Head of caudate nucleus (tissue), 42 donors: ENCODE measurements at regions of chr11 and their contacts with region 1.

Region 1: DNA sequence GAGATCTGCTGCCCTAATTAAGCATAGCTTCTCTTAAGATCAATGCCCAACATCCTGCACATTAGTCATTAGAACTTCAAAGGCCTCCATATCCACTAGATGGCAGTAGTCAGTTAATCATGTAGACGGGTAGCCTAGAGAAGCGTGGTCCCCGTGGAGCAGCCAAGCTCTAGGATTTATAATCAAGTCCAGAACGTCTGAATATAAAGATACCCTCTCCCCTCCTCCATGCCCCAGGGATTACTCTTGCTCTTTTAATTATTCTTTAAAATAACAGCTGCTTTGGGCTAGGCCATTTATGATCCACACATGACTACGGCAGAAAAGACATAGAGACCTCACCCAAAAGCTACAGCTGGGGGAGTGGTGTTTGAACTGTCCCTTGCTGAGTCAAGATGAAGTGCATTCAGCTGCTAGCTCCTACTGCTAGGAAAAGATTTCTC is 327.6 kb upstream of the PLET1 start:
- DNase-seq: peak; percentile 47 to 92 (median 76)

Region 2: DNA sequence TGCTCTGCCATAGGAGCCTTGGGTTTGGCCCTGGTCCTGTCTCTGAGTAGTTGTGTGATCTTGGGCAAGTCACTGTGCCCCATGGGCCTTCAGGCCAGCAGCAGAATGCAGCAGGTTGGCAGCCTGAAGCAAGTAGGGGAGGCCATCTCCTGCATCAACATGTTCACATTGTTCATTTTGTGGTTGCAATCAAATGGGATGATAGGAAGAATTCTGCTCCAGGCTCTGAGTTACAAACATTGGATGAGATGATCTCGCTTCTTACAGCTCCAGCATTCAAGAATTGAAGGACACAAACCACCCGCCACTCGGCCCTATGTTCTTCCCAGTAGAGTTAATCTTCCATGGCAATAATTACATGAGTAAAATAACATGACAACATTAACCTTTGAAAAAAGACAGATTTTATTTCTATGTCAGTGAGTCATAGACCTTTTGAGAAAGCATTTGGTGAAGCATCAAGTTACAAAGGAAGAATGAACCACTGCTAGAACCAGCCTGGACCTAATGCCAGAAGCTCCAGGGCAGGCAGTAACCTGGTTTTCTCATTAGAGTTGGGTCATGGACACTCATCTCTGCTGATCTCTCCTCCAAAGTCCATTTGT is 64.6 kb after region 1 on chr11:
- intact Hi-C with region 1: no loop called
- DNase-seq: no peak

Region 3: DNA sequence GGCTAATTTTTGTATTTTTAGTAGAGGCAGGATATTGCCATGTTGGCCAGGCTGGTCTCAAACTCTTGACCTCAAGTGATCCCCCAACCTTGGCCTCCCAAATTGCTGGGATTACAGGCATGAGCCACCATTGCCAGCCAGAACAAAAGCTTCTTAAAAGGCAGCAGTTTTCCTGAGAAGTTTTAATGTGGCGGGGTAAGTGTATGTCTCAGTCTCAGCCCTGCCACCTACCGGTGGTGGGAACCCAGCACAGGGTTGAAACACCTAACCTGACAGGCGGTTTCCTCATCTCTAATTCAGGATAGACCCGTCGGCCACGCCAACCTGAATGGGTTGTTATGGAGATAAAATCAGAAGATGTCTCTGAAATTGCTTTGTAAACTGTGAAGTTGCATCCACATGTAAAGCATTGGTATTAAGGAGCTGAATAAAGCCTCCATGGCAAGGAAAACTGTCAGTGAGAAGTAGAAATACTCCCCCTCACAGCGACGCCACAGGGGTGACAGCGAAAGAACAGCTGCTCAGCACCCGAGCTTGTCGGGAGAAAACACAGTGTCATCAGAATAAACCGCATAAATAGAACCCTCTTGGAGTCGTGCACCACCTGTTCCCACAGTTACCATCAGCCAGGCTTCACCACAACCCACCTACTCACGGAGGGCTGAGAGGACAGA is 207.0 kb after region 1 on chr11:
- intact Hi-C with region 1: loop called (anchors 10 kb)
- DNase-seq: peak in 33 of 42 donors; percentile 24 to 82 (median 54)

Region 4: GRCh38 chr11:113119966-113120736 is 531.9 kb after region 1 on chr11:
- intact Hi-C with region 1: loop called (anchors 10 kb)
- DNase-seq: no peak

Region 5: GRCh38 chr11:113289431-113290187 is 701.3 kb after region 1 on chr11:
- intact Hi-C with region 1: loop called (anchors 5 kb)
- DNase-seq: peak; percentile 52 to 90 (median 75)